GM10248 (cell line): ENCODE measurements at regions of chr6 and their contacts with region 1.

Region 1: GRCh38 chr6:139219271-139219729 is 72.5 kb downstream of the TXLNB start:
- DNase-seq: peak; percentile 75
- CTCF ChIP-seq: peak; percentile 89

Region 2: DNA sequence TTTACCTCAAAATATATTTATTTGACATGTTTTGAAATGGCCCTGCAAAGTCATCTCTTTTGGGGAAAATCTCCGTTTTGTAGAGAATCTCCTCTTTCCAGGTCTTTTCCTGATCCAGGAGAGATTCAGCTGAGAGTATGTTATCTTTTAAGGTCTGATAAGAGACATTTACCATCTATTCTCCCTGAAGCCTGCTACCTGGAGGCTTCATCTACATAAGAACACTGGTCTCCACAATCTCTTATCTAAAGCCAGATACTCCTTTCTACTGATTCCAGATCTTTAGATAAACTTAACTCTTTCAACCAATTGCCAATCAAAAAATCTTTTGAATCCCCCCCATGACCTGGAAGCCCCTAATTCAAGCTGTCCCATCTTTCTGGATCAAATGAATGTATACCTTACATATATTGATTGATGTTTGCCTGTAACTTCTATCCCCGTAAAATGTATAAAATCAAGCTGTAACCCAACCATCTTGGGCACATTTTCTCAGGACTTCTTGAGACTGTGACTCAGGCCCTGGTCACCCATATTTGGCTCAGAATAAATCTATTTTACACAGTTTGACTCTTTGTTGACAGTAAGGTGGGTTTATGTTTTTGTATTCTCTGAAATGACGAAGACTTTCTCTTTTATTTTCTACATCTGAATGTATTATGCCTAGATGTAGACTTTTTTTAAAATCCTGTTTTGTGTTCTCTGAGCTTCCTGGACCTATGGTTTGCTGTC is 327.9 kb before region 1 on chr6:
- CTCF ChIA-PET with region 1: no interaction called
- POLR2A ChIA-PET with region 1: no interaction called
- DNase-seq: no peak
- CTCF ChIP-seq: no peak

Region 3: GRCh38 chr6:139230391-139230840 is 11.1 kb after region 1 on chr6:
- CTCF ChIA-PET with region 1: interaction called, 12 read pairs
- POLR2A ChIA-PET with region 1: no interaction called
- DNase-seq: no peak
- CTCF ChIP-seq: peak; percentile 41

Region 4: GRCh38 chr6:139256087-139256486 is 36.8 kb after region 1 on chr6:
- CTCF ChIA-PET with region 1: interaction called, 14 read pairs
- POLR2A ChIA-PET with region 1: no interaction called
- DNase-seq: no peak
- CTCF ChIP-seq: no peak

Region 5: DNA sequence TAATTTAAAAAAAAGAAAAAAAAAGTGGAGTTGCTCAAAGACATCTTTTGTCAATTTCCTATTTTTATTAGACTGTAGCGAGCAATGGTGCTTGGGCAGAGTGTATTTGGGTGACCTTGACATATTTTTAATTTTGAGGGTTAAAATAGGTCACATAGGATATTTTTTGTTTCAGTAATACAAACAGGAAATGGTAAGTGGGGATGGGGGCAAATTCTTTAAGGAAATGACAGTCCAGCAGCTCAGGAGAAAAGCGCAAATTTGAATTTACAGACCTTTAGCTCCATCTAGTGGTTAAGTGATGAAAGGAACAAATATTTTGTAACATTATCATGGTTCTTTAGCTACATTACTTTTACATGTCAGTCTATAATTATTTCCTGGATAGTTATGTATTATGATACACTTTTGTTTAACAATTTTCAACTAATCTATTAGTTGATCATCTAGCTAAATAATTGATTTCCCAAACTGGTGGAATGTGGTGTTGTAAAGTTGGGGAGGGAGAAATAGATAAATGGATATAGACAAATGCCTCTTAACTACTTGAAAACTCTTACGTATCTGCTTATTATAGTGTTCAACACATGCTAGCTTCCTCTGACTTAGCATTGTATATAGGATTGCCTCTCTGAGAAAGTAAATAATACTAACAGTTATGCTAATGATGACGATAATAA is 145.1 kb after region 1 on chr6:
- CTCF ChIA-PET with region 1: interaction called, 53 read pairs
- POLR2A ChIA-PET with region 1: no interaction called
- DNase-seq: peak; percentile 53
- CTCF ChIP-seq: peak; percentile 44

Region 6: GRCh38 chr6:139375232-139376016 is 156.1 kb after region 1 on chr6:
- CTCF ChIA-PET with region 1: interaction called, 13 read pairs
- POLR2A ChIA-PET with region 1: no interaction called
- DNase-seq: peak; percentile 80
- CTCF ChIP-seq: no peak